CD4-positive, alpha-beta memory T cell (primary cell): ENCODE measurements at regions of chr11 and their contacts with region 1.

Region 1: DNA sequence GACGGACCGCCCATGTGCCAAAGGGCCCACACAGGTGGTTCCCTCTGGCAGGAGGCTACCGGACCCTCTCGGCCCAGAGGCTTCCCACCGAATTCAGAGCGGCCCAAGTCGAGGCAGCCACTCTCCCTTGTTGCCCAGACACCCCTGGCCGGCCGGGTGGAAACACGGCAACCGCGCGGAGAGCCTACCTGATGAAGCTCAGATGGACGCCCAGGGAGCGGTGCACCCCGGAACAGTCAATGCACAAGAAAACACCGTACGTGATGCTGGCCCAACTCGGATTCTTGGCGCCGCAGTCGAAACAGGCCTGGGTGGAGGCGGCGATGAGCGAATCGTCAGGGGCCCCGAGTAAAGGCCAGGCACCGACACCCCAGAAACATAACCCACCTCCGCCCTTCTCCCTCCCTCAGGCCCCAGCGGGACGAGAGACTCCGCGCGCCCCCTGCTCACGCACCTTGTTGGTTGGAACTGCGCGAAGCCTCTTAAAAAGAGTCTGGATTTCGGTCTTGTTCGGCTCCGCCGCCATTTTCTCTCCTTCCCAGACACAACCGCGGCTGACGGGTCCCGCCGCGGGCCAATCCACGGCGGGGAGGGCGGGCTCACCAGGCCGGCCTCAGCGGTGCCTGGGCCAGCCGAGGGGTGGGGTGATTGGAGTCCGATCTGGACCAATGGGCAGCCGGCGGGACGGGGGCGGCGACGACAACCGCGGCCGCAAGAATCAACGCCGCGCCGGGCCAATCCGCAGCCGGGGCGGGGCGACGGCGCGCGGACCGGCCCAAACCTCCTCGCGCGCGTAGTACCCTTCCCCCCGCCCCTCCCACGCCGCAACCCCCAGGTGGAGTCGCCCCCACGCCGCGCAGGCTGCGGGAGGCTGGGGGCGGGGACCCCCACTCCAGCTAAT is at the start of gene ARFGAP2:
- DNase-seq: peak; percentile 96 to 97 (median 97)
- H3K4me3 ChIP-seq: peak within 1 kb of the TSS; percentile 89 to 91
- H3K4me3 Mint-ChIP-seq: peak within 1 kb of the TSS; percentile 97 to 100 (median 98)
- H3K27ac ChIP-seq: peak within 1 kb of the TSS; percentile 92
- H3K27ac Mint-ChIP-seq: peak within 1 kb of the TSS; percentile 99 to 100 (median 99)
- H3K4me1 ChIP-seq: peaks cover 42% of the 10 kb centered on the region
- H3K4me1 Mint-ChIP-seq: peaks cover 16 to 65% (median 36%) of the 10 kb centered on the region in 4 donors
- H3K27me3 ChIP-seq: no peaks in the 10 kb centered on the region
- H3K27me3 Mint-ChIP-seq: peaks cover 0 to 5% of the 10 kb centered on the region in 2 donors
- total RNA-seq, gene ARFGAP2: 141 to 142 TPM

Region 2: DNA sequence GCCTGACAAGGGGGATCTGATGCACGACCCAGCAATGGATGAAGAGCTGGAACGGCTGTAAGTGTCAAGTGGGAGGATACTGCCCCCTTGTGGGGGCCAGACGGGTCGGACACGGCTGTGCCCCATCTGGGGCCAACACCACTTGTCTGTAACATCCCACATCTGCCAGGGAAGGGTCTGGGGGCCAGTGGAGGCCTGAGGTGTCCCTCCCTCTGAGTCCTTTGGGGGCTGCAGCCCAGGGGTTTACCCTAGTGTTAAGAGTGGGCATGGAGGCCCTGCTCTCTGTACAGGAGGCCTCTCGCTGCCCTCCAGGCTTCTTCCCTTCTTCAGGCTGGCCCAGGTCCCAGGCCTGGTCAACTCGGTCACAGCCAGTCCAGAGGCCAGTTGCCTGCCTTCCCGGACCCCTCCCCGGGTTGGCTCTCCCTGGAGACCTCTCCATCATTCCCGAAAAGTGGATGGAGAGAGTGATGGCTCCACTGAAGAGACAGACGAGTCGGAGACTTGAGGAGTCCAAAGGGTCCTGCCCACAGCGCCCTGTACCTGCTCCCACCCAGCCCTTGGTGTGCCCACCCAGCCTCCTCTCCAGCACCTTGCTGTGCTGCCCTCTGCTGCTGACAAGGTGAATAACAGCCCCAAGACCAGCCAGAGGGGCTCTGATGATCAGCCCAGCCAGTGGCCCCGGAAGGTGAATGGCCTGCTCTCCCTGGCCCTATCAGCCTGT is 15.3 kb before region 1 on chr11:
- CTCF ChIA-PET with region 1: interaction called, 20 read pairs
- POLR2A ChIA-PET with region 1: interaction called, 5 read pairs
- intact Hi-C with region 1: no loop called
- DNase-seq: peak; percentile 49 to 59 (median 55)
- H3K4me3 ChIP-seq: no peak overlapping the region
- H3K4me3 Mint-ChIP-seq: no peak overlapping the region
- H3K27ac ChIP-seq: no peak overlapping the region
- H3K27ac Mint-ChIP-seq: peak overlapping the region in 1 of 7 donors; percentile 75
- H3K4me1 ChIP-seq: no peaks in the 10 kb centered on the region
- H3K4me1 Mint-ChIP-seq: peaks cover 0 to 1% (median 0%) of the 10 kb centered on the region in 4 donors
- H3K27me3 ChIP-seq: no peaks in the 10 kb centered on the region
- H3K27me3 Mint-ChIP-seq: no peaks in the 10 kb centered on the region

Region 3: GRCh38 chr11:47233989-47234668 is 57.6 kb after region 1 on chr11:
- CTCF ChIA-PET with region 1: interaction called, 11 read pairs
- POLR2A ChIA-PET with region 1: no interaction called
- intact Hi-C with region 1: no loop called
- DNase-seq: peak in 4 of 5 donors; percentile 11 to 61 (median 21)
- H3K4me3 ChIP-seq: no peak overlapping the region
- H3K4me3 Mint-ChIP-seq: peak overlapping the region; percentile 56 to 82 (median 70)
- H3K27ac ChIP-seq: peak overlapping the region; percentile 75
- H3K27ac Mint-ChIP-seq: peak overlapping the region; percentile 92 to 99 (median 97)
- H3K4me1 ChIP-seq: peaks cover 25% of the 10 kb centered on the region
- H3K4me1 Mint-ChIP-seq: peaks cover 7 to 32% (median 23%) of the 10 kb centered on the region in 4 donors
- H3K27me3 ChIP-seq: no peaks in the 10 kb centered on the region
- H3K27me3 Mint-ChIP-seq: no peaks in the 10 kb centered on the region

Region 4: GRCh38 chr11:47259178-47259977 is 82.8 kb after region 1 on chr11:
- CTCF ChIA-PET with region 1: interaction called, 15 read pairs
- POLR2A ChIA-PET with region 1: interaction called, 4 read pairs
- intact Hi-C with region 1: loop called (anchors 1 kb)
- DNase-seq: peak in 1 of 5 donors; percentile 26
- H3K4me3 ChIP-seq: no peak overlapping the region
- H3K4me3 Mint-ChIP-seq: no peak overlapping the region
- H3K27ac ChIP-seq: no peak overlapping the region
- H3K27ac Mint-ChIP-seq: peak overlapping the region in 2 of 7 donors; percentile 19 to 37
- H3K4me1 ChIP-seq: peaks cover 9% of the 10 kb centered on the region
- H3K4me1 Mint-ChIP-seq: peaks cover 0 to 5% (median 4%) of the 10 kb centered on the region in 4 donors
- H3K27me3 ChIP-seq: no peaks in the 10 kb centered on the region
- H3K27me3 Mint-ChIP-seq: no peaks in the 10 kb centered on the region

Region 5: DNA sequence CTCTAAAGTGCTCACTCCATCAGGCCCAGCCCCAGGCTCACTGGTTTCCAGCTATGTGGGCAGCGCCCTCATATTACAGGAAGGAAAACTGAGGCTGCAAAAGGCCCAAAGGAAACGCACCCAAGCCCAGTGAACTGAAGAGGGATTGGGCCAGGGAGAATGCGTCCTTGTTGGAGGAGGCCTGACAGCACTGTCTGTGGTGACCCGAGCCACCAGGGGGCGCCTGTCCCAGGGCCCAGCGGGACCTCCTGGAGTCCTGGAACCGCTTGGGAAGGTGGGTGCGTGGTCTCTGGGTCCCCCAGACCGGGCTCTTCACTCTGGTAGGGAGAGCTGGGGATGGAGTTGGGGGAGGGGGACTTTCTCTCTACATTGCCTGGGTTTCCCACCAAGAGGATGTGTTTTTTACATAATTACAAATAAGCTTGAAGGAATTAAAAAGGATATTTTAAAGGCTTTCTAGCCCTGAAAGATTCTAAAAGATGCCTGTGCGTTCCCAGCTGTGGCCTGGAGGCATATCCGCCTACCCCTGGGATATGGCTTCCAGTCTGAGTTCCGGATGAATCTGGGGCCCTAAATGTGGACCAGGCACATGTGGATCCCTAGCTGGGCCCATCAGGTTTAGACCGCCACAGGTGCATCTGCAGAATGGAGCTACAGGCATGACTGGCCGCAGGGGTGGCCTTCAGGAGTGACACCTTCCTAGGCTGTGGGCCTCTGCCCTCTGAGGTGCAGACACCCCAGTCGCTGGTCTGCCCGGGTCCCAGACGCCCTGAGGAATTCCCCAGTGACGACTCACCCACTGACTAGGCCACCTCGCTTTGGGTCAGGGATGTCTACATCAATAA is 197.5 kb after region 1 on chr11:
- CTCF ChIA-PET with region 1: interaction called, 12 read pairs
- POLR2A ChIA-PET with region 1: no interaction called
- intact Hi-C with region 1: no loop called
- DNase-seq: peak; percentile 78 to 83 (median 80)
- H3K4me3 ChIP-seq: no peak overlapping the region
- H3K4me3 Mint-ChIP-seq: no peak overlapping the region
- H3K27ac ChIP-seq: no peak overlapping the region
- H3K27ac Mint-ChIP-seq: peak overlapping the region in 1 of 7 donors; percentile 52
- H3K4me1 ChIP-seq: peaks cover 7% of the 10 kb centered on the region
- H3K4me1 Mint-ChIP-seq: peaks cover 0 to 8% (median 3%) of the 10 kb centered on the region in 4 donors
- H3K27me3 ChIP-seq: no peaks in the 10 kb centered on the region
- H3K27me3 Mint-ChIP-seq: no peaks in the 10 kb centered on the region

Region 6: DNA sequence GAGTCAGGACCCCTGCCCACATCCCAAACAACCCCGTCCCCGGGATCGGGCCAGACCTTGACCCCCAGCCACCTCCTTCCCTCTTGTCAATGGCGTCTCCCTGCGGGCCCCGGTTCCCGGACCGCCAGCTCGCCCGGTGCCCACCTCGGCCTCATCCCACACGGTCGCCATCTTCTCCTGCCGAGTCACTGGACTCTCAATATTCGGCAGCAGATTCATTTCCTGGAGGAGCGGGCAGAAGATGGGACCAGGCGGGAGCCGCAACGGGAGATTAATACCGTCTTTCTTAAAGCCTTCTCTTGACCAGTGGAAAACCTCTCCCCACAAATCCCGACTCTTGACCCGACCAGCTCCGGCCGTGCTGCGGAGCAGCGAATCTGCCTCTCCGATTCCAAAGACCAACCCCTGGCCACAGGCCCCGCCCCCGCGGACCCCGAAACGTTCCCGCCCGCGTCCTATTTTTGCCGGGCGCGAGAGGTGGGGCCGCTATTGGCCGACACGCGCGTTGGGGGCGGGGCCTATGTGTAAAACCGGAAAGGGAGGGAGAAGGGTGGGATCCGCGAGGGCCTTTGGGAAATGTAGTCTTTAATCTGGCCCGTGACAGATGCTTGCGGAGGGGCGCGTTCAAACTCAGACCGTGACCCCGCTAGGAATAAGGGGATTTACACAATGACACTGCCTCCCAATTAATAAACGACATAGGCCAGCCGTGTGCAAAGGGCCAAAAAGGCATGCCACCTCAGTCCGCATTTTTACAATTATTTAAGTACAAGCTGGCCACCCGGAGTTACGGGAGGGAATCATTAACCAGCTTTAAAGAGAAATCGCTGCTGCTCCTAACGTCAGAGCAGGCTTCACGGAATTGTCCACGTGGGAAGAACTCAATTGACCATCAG is 249.7 kb after region 1 on chr11 and contains the start of gene PSMC3:
- CTCF ChIA-PET with region 1: no interaction called
- POLR2A ChIA-PET with region 1: interaction called, 14 read pairs
- intact Hi-C with region 1: loop called (anchors 1 kb)
- DNase-seq: peak; percentile 94 to 97 (median 96)
- H3K4me3 ChIP-seq: peak within 1 kb of the TSS; percentile 64 to 91
- H3K4me3 Mint-ChIP-seq: peak within 1 kb of the TSS; percentile 99 to 100 (median 100)
- H3K27ac ChIP-seq: peak within 1 kb of the TSS; percentile 85
- H3K27ac Mint-ChIP-seq: peak within 1 kb of the TSS; percentile 92 to 99 (median 99)
- H3K4me1 ChIP-seq: peaks cover 18% of the 10 kb centered on the region
- H3K4me1 Mint-ChIP-seq: peaks cover 12 to 32% (median 22%) of the 10 kb centered on the region in 4 donors
- H3K27me3 ChIP-seq: no peaks in the 10 kb centered on the region
- H3K27me3 Mint-ChIP-seq: no peaks in the 10 kb centered on the region
- total RNA-seq, gene PSMC3: 53.9 to 59.6 TPM

Region 7: DNA sequence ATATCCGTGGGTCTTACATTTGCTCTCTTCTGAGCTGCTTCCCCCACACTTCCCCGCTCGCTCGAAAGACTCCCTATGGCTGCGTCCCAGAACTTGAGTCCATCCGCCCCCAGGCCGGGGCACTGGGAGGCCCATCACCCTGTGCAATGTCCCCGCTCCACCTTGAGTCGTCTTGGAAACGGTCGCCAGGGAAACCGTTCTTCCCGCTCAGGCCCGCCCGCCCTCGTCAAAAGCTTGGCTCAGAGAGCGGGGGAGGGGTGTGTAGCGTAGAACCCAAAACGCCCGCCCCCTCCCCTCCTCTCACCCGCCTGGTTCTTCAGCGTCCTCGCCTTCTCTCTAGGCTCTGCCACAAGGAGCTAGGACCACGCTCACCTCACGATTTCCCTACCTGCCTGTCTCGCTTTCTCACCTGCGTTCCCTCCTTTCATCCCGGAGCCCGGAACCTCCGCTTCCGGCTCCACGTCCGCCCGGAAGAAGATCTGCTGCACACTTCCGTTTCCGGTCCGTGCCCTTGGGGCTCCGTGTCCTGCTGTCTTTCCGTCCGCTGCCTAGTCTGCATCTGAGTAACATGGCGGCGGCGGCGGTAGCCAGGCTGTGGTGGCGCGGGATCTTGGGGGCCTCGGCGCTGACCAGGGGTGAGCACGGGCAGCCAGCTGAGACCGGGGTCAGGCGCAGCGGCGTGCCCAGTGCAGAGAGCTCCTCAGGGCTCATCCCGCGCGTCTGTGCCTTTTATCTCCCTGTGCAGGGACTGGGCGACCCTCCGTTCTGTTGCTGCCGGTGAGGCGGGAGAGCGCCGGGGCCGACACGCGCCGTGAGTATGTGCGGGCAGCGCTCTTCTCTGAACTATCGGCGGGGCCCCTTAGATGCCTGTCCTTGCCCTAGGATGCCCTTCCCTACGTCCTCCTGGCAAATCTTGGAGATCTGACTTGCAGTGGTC is 402.2 kb after region 1 on chr11 and contains the starts of genes KBTBD4 and NDUFS3:
- CTCF ChIA-PET with region 1: no interaction called
- POLR2A ChIA-PET with region 1: no interaction called
- intact Hi-C with region 1: loop called (anchors 10 kb)
- DNase-seq: peak; percentile 87 to 90 (median 88)
- H3K4me3 ChIP-seq: peak within 1 kb of the TSS; percentile 80 to 93
- H3K4me3 Mint-ChIP-seq: peak within 1 kb of the TSS; percentile 97 to 100 (median 100)
- H3K27ac ChIP-seq: peak within 1 kb of the TSS; percentile 83
- H3K27ac Mint-ChIP-seq: peak within 1 kb of the TSS; percentile 96 to 100 (median 100)
- H3K4me1 ChIP-seq: peaks cover 42% of the 10 kb centered on the region
- H3K4me1 Mint-ChIP-seq: peaks cover 19 to 48% (median 35%) of the 10 kb centered on the region in 4 donors
- H3K27me3 ChIP-seq: no peaks in the 10 kb centered on the region
- H3K27me3 Mint-ChIP-seq: peaks cover 0 to 1% of the 10 kb centered on the region in 2 donors
- total RNA-seq, gene KBTBD4: 21.2 to 22.5 TPM
- total RNA-seq, gene NDUFS3: 70.9 to 71.0 TPM